ENCODE measurements at regions of chr4 and their contacts with region 1.

Region 1: DNA sequence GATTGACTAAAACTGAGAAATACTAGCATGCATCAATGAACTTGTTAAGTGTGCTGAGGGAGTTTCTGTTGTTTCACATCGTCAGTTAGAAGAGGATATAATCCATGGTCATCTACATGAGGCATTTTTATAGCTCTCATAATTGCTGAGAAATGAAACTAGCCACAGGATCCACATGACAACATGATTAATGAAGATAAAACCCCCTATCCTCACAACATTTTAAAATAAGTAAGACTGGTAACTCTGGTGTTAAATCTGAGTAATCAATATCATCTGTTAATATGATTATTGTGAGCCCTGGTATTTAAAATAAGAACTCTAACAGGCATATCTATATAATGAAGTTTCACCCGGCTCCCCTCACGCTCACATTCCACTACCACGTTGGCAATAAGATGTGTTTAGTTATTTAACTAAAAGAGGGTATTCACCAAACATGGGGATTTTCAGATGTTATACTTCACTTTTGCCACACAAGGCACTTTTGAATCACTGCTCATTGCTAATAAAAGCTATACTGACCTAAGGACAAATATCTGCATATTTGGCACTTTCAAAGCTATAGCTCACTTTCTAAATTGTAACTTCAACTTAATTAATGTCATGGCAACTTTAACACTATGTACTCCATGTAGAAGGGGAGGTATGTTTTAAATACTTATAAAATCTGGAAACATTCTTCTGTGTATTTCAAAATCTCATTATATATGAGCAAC is 6.7 kb downstream of the UNC5C start:
- DNase-seq: no peak
- ATAC-seq: no peak
- H3K4me3 ChIP-seq: peak overlapping the region in 5 of 10 donors; percentile 0 to 29 (median 21)
- H3K27ac ChIP-seq: peak overlapping the region in 8 of 10 donors; percentile 7 to 87 (median 62)
- H3K4me1 ChIP-seq: peaks cover 0 to 4% (median 0%) of the 10 kb centered on the region in 9 donors
- H3K27me3 ChIP-seq: peaks cover 0 to 16% (median 9%) of the 10 kb centered on the region in 7 donors
- CTCF ChIP-seq: no peak

Region 2: DNA sequence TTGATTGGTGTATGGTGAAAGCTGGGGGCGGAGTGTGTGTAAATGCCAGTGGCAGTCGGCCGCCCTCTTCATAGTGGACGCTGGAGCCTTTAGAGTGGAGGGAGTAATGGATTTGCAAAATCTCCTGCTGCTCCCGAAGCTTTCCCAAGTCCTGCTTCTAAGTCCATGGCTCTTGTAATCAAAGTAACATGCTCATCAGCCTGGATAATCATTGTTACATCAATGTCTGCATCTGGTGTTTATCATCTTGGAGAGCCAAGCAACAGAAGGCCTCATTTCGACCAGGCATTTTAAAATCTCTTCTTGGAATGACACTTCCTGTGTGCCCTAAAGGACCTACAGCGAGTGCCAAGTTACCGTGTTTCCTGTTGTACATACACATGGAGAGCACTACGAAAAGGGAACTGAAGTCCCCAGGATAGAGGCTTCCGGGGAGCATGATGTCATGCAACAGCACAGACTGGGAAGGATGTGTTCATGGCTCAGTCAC is 25.5 kb before region 1 on chr4:
- intact Hi-C with region 1: loop called in 1 of 10 experiments (anchors 2 kb)
- DNase-seq: no peak
- ATAC-seq: peak in 6 of 8 donors; percentile 51 to 77 (median 66)
- H3K4me3 ChIP-seq: no peak overlapping the region
- H3K27ac ChIP-seq: peak overlapping the region in 2 of 10 donors; percentile 5 to 20
- H3K4me1 ChIP-seq: peaks cover 0 to 9% (median 0%) of the 10 kb centered on the region in 9 donors
- H3K27me3 ChIP-seq: no peaks in the 10 kb centered on the region
- CTCF ChIP-seq: no peak